Activated CD4-positive, alpha-beta T cell treated with anti-CD3 and anti-CD28 coated beads for 36 hours (primary cell): ENCODE measurements at regions of chr2 and their contacts with region 1.

Region 1: GRCh38 chr2:86221066-86221684 is 21.9 kb downstream of the MRPL35 start:
- DNase-seq: peak; percentile 80
- ATAC-seq: peak; percentile 78
- H3K4me3 Mint-ChIP-seq: no peak overlapping the region
- H3K27ac Mint-ChIP-seq: no peak overlapping the region
- H3K4me1 Mint-ChIP-seq: peaks cover 23% of the 10 kb centered on the region
- H3K27me3 Mint-ChIP-seq: no peaks in the 10 kb centered on the region

Region 2: DNA sequence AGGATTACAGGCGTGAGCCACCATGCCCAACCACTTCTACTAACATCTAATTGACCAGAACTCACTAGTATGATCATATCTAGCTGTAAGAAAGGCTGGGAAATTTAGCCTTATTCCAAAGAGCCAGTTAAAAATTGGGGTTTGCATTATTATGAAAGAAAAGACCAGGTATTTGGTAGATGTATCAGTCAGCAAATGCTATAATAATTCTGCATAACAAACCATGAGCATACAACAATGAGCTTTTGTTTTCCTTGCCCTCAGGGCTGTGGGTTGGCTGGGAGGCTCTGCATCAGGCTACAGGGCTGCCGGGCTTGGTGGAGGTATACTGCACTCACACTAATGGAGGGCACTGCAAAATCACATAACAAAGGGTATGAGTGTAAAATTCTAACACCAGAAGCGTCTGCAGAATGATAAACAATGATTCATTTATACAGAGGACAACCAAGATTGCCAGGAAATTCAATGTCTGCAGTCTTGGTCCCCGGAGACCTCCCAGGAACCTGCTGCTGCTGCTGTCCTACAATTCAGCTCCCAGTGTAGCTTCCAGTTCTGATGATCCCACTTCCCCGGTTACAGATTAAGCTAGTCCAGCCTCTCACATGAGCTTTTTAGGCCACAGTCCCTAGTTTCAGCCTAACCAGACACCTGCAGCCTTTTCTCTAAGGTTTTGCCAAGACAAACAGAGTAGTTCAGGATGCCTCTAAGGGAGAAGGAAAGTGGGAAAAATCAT is 300.2 kb before region 1 on chr2:
- CTCF ChIA-PET with region 1: no interaction called
- POLR2A ChIA-PET with region 1: no interaction called
- intact Hi-C with region 1: no loop called
- DNase-seq: no peak
- ATAC-seq: no peak
- H3K4me3 Mint-ChIP-seq: no peak overlapping the region
- H3K27ac Mint-ChIP-seq: no peak overlapping the region
- H3K4me1 Mint-ChIP-seq: peaks cover 4% of the 10 kb centered on the region
- H3K27me3 Mint-ChIP-seq: peaks cover 3% of the 10 kb centered on the region

Region 3: GRCh38 chr2:86234563-86235131 is 13.5 kb after region 1 on chr2:
- CTCF ChIA-PET with region 1: interaction called, 14 read pairs
- POLR2A ChIA-PET with region 1: no interaction called
- intact Hi-C with region 1: no loop called
- DNase-seq: no peak
- ATAC-seq: no peak
- H3K4me3 Mint-ChIP-seq: no peak overlapping the region
- H3K27ac Mint-ChIP-seq: no peak overlapping the region
- H3K4me1 Mint-ChIP-seq: peaks cover 8% of the 10 kb centered on the region
- H3K27me3 Mint-ChIP-seq: peaks cover 2% of the 10 kb centered on the region

Region 4: GRCh38 chr2:86298411-86299379 is 77.5 kb after region 1 on chr2:
- CTCF ChIA-PET with region 1: interaction called, 21 read pairs
- POLR2A ChIA-PET with region 1: no interaction called
- intact Hi-C with region 1: loop called (anchors 1 kb)
- DNase-seq: no peak
- ATAC-seq: no peak
- H3K4me3 Mint-ChIP-seq: no peak overlapping the region
- H3K27ac Mint-ChIP-seq: no peak overlapping the region
- H3K4me1 Mint-ChIP-seq: no peaks in the 10 kb centered on the region
- H3K27me3 Mint-ChIP-seq: peaks cover 2% of the 10 kb centered on the region

Region 5: DNA sequence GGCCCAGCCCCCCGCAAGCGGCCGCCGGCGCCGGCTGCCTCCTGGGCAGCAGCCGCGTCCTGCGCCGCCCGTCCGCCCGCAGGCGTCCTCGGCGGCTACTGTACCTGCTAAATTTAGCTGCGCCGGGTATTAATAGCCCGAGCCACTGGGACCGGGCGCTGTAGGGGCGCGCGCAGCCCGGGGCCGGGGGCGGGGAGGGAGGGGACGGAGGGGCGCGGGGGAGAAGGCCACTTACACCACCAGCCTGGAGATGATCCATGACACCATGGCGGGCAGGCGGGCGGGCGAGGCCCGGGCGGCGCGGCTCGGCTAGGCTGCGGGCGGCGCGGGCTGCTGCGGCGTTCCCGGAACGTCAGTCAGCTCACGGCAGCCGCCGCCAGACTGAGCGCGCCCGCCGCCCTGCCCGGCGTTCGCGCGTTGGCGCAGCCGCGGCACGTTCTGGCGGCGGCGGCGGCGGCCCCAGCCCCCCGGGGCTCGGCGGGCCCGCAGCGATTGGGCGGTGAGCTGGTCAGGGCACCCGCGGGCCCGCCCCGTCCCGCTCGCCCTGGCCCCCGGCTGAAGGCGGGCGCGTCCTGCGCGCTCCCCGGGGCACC is 116.2 kb after region 1 on chr2 and contains the start of gene REEP1:
- CTCF ChIA-PET with region 1: interaction called, 3 read pairs
- POLR2A ChIA-PET with region 1: no interaction called
- intact Hi-C with region 1: loop called in 1 of 2 experiments (anchors 1 kb)
- DNase-seq: peak; percentile 55
- ATAC-seq: peak; percentile 78
- H3K4me3 Mint-ChIP-seq: peak within 1 kb of the TSS; percentile 72
- H3K27ac Mint-ChIP-seq: no peak within 1 kb of the TSS
- H3K4me1 Mint-ChIP-seq: peaks cover 14% of the 10 kb centered on the region
- H3K27me3 Mint-ChIP-seq: peaks cover 56% of the 10 kb centered on the region
- total RNA-seq, gene REEP1: 0.19 to 0.30 TPM

Region 6: DNA sequence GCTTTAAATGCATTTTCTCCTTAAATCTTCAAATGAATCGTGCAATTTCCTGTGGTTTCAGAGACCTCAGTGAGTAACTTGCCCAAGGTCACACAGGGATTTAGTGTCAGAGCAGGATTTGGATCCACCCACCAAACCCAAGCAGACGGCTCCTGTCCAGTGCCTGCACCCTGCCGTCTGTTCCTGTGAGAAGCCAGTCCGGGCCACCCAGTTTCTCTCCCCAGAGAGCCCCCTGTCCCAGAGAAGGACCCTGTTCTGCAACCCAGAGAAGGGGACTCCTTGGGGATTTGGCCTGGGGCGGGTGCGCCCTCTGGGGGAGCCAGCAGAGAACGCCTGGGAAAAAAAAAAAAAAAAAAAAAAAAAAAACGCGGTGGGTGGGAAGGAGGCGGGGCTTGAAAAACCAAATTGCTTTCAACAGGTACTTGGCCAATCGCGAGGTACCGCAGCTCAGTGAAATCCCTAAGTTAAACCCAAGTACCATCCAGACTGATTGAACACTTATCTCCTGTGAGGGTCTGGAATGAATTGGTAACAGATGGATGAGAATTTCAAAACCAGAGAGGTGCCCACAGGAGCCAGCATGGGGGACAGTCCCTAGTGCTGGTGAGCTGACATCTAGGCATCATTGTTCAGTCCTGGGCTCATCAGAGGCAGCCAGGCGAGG is 147.1 kb after region 1 on chr2:
- CTCF ChIA-PET with region 1: interaction called, 24 read pairs
- POLR2A ChIA-PET with region 1: no interaction called
- intact Hi-C with region 1: loop called (anchors 1 kb)
- DNase-seq: peak; percentile 65
- ATAC-seq: peak; percentile 76
- H3K4me3 Mint-ChIP-seq: peak overlapping the region; percentile 53
- H3K27ac Mint-ChIP-seq: peak overlapping the region; percentile 72
- H3K4me1 Mint-ChIP-seq: peaks cover 47% of the 10 kb centered on the region
- H3K27me3 Mint-ChIP-seq: no peaks in the 10 kb centered on the region